ENCODE measurements at regions of chr5 and their contacts with region 1.

Region 1: GRCh38 chr5:113606298-113607134 is 93.0 kb downstream of the YTHDC2 start:
- DNase-seq: peak; percentile 18
- H3K4me3 ChIP-seq: no peak overlapping the region
- H3K27ac ChIP-seq: no peak overlapping the region
- H3K27me3 ChIP-seq: no peaks in the 10 kb centered on the region
- CTCF ChIP-seq: peak; percentile 82

Region 2: GRCh38 chr5:113581388-113581787 is 25.1 kb before region 1 on chr5:
- CTCF ChIA-PET with region 1: interaction called, 10 read pairs
- POLR2A ChIA-PET with region 1: no interaction called
- DNase-seq: no peak
- H3K4me3 ChIP-seq: no peak overlapping the region
- H3K27ac ChIP-seq: no peak overlapping the region
- H3K27me3 ChIP-seq: no peaks in the 10 kb centered on the region
- CTCF ChIP-seq: no peak